ENCODE measurements at regions of chr22 and their contacts with region 1.

Region 1: GRCh38 chr22:41237707-41238569 is 2.8 kb downstream of the CHADL start:
- DNase-seq: peak in 5 of 10 donors; percentile 36 to 75 (median 63)
- H3K4me3 ChIP-seq: peak overlapping the region; percentile 11 to 75 (median 49)
- H3K27ac ChIP-seq: peak overlapping the region; percentile 39 to 100 (median 99)
- H3K27me3 ChIP-seq: no peaks in the 10 kb centered on the region
- CTCF ChIP-seq: peak in 42 of 56 donors; percentile 11 to 52 (median 35)

Region 2: DNA sequence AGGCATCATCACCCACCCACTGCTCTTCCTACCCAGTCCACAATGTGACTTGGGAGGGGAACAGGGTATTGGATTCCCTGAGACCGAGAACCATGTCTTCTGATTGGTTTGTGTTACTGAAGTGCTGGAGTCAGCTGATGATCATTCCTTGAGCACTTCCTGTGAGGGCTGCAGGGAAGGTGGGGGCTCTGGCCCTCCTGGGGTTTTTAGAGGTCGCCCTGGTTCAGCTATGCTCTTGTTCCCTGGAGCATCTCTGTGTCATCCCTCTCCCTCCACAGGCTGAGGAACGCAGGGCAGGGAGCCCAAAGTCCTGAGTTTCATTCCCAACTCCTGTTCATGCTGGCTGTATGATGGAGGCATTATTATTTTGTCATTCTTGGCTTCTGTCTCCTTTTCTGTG is 70.1 kb after region 1 on chr22:
- intact Hi-C with region 1: loop called in 1 of 2 experiments (anchors 2 kb)
- DNase-seq: no peak
- H3K4me3 ChIP-seq: no peak overlapping the region
- H3K27ac ChIP-seq: peak overlapping the region in 54 of 59 donors; percentile 2 to 80 (median 50)
- H3K27me3 ChIP-seq: no peaks in the 10 kb centered on the region
- CTCF ChIP-seq: no peak